GM18951 (cell line): ENCODE measurements at regions of chr1 and their contacts with region 1.

Region 1: GRCh38 chr1:22416555-22417454 is 34.8 kb upstream of the ZBTB40 start:
- POLR2A ChIP-seq: no peak

Region 2: GRCh38 chr1:22052115-22053016 is 364.4 kb before region 1 on chr1 and contains the start of gene CDC42:
- in situ Hi-C with region 1: no loop called
- POLR2A ChIP-seq: peak; percentile 95

Region 3: DNA sequence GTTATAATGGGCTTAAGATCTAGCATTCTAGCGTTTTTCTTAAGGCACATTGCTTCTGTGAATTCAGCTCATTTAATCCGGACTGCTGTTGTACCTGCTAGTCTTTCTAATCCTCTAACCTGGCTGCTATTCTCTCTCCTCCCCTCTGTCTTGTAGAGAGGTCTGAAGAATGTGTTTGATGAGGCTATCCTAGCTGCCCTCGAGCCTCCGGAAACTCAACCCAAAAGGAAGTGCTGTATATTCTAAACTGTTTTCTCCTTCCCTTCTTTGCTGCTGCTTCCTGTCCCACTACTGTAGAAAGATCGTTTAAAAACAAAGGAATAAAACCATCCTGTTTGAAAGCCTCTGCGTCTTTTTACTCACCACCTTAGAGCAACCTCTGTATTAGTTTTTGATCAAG is 327.0 kb before region 1 on chr1:
- in situ Hi-C with region 1: no loop called
- POLR2A ChIP-seq: no peak

Region 4: GRCh38 chr1:22131875-22132486 is 284.8 kb before region 1 on chr1:
- in situ Hi-C with region 1: loop called (anchors 25 kb)
- POLR2A ChIP-seq: no peak

Region 5: GRCh38 chr1:22641906-22642636 is 225.3 kb after region 1 on chr1:
- in situ Hi-C with region 1: loop called (anchors 10 kb)
- POLR2A ChIP-seq: no peak

Region 6: GRCh38 chr1:23152966-23153684 is 736.3 kb after region 1 on chr1:
- in situ Hi-C with region 1: no loop called
- POLR2A ChIP-seq: no peak